ENCODE measurements at regions of chr3 and their contacts with region 1.

Region 1: DNA sequence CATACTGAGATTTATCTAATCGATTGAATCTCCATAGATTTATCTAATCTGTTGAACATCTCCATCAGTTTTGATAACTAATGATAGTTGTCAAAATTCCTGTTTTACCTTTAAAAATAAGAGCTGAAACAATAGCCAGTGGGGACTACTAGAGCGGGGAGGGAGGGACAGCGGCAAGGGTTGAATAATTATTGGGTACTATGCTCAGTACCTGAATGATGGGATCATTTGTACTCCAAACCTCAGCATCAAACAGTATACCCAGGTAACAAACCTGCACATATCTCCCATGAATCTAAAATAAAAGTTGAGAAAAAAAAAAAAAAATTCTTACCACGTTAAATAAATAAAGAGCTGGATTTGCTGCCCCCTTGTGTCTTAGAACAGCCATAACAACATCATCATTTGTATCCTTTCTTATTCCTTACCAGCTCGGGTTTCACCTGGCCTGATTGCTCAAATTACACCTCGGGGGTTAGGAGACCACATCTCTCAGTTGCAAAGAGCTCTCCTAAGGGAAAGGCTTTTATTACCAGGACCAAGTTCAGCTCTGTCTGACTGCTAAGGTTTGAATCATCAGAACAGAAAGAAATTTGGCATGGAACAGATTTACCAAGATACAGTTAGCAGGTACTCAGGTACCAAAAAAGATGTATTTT is 25.7 kb upstream of the RPL39L start:
- DNase-seq: peak in 7 of 9 donors; percentile 53 to 78 (median 72)
- ATAC-seq: peak; percentile 86
- H3K4me3 ChIP-seq: no peak overlapping the region
- H3K4me3 Mint-ChIP-seq: no peak overlapping the region
- H3K27ac ChIP-seq: no peak overlapping the region
- H3K27ac Mint-ChIP-seq: peak overlapping the region in 1 of 9 donors; percentile 21
- H3K4me1 ChIP-seq: peaks cover 0 to 5% of the 10 kb centered on the region in 2 donors
- H3K4me1 Mint-ChIP-seq: peaks cover 3 to 15% (median 7%) of the 10 kb centered on the region in 7 donors
- H3K27me3 ChIP-seq: no peaks in the 10 kb centered on the region
- H3K27me3 Mint-ChIP-seq: peaks cover 0 to 39% (median 4%) of the 10 kb centered on the region in 5 donors

Region 2: GRCh38 chr3:187041362-187042307 is 123.4 kb before region 1 on chr3:
- CTCF ChIA-PET with region 1: interaction called, 10 read pairs
- POLR2A ChIA-PET with region 1: no interaction called
- intact Hi-C with region 1: no loop called
- DNase-seq: peak in 8 of 9 donors; percentile 38 to 77 (median 61)
- ATAC-seq: peak; percentile 93
- H3K4me3 ChIP-seq: peak overlapping the region; percentile 12
- H3K4me3 Mint-ChIP-seq: peak overlapping the region; percentile 56 to 88 (median 80)
- H3K27ac ChIP-seq: peak overlapping the region; percentile 67
- H3K27ac Mint-ChIP-seq: peak overlapping the region; percentile 93 to 99 (median 96)
- H3K4me1 ChIP-seq: peaks cover 41 to 79% of the 10 kb centered on the region in 2 donors
- H3K4me1 Mint-ChIP-seq: peaks cover 59 to 95% (median 84%) of the 10 kb centered on the region in 7 donors
- H3K27me3 ChIP-seq: no peaks in the 10 kb centered on the region
- H3K27me3 Mint-ChIP-seq: no peaks in the 10 kb centered on the region

Region 3: DNA sequence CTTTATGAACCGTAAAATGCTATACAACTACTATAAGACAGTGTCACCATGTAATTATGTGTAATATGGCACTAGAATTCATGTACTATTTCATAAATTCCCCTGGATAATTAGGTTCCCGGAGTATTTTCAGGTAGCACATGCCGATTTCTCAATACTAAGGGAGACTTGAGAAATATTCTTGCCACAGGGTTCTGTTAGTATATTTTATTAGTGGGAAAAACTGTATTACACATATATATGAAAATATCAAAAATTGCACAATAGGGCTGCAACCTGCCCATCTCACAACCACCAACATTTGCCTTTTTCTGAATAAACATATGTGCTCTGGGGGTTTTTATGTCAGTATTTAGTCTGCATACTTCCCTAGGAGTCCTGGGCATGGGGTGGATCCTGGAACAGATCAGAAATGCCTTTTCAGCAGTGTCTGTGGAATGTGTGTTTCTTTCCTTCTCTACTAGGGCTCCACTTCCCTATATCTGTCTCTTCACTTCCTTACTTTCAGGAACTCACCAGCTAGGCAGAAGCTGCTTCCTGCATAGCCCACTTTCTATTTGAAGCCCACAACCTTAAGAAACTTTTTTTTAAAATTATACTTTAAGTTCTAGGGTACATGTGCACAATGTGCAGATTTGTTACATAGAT is 113.2 kb before region 1 on chr3:
- CTCF ChIA-PET with region 1: no interaction called
- POLR2A ChIA-PET with region 1: no interaction called
- intact Hi-C with region 1: no loop called
- DNase-seq: no peak
- ATAC-seq: no peak
- H3K4me3 ChIP-seq: no peak overlapping the region
- H3K4me3 Mint-ChIP-seq: peak overlapping the region in 2 of 10 donors; percentile 9 to 87
- H3K27ac ChIP-seq: no peak overlapping the region
- H3K27ac Mint-ChIP-seq: peak overlapping the region in 7 of 9 donors; percentile 38 to 99 (median 56)
- H3K4me1 ChIP-seq: peaks cover 0 to 21% of the 10 kb centered on the region in 2 donors
- H3K4me1 Mint-ChIP-seq: peaks cover 53 to 87% (median 58%) of the 10 kb centered on the region in 7 donors
- H3K27me3 ChIP-seq: no peaks in the 10 kb centered on the region
- H3K27me3 Mint-ChIP-seq: no peaks in the 10 kb centered on the region

Region 4: GRCh38 chr3:187066228-187066995 is 98.6 kb before region 1 on chr3:
- CTCF ChIA-PET with region 1: no interaction called
- POLR2A ChIA-PET with region 1: interaction called, 3 read pairs
- intact Hi-C with region 1: loop called in 1 of 2 experiments (anchors 1 kb)
- DNase-seq: peak in 7 of 9 donors; percentile 54 to 75 (median 67)
- ATAC-seq: peak; percentile 83
- H3K4me3 ChIP-seq: no peak overlapping the region
- H3K4me3 Mint-ChIP-seq: peak overlapping the region in 7 of 10 donors; percentile 18 to 42 (median 31)
- H3K27ac ChIP-seq: peak overlapping the region; percentile 14
- H3K27ac Mint-ChIP-seq: peak overlapping the region; percentile 61 to 92 (median 84)
- H3K4me1 ChIP-seq: peaks cover 13 to 38% of the 10 kb centered on the region in 2 donors
- H3K4me1 Mint-ChIP-seq: peaks cover 49 to 87% (median 79%) of the 10 kb centered on the region in 7 donors
- H3K27me3 ChIP-seq: no peaks in the 10 kb centered on the region
- H3K27me3 Mint-ChIP-seq: no peaks in the 10 kb centered on the region

Region 5: DNA sequence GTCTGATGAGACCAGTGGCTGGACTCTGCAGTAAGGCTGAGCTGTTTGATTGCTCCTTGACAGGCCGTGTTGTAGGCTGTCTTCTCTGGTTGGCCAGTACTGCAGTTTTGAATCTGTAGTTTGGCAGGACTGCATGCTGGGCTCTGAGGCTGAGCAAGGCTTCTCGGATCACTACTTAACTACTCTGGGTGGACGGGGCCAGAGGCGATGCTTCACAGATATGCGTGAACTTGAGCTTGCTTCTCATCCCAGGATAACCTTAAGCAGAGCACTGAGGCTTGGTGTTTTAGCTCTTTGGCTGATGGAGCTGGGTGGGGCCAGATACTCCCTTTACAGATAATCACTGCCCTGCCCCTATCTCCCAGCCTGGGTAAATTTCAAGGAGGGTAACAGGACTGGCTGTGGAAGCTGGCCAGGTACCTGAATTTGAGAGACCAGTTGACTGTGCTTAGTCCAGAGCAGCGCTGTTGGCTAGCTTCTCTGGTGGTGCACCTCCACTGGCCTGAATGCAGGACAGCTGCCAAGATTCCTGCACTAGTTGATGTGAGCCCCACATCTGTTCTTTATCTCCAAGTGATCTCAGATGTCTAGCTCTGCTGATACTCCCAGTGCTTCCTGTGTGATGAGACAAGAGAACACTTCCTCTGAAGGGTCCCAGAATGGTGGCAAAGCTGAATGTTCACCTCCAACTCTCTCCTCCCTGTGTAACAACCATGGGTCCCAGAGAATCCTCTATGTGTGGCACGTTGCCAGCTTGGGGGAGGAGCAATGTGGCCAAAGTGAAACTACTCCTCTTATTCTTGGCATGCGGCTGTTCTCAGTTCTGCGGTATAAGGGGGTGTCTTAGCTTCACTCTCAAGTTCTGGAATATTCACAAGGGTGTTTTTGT is 63.6 kb before region 1 on chr3:
- CTCF ChIA-PET with region 1: interaction called, 12 read pairs
- POLR2A ChIA-PET with region 1: no interaction called
- intact Hi-C with region 1: no loop called
- DNase-seq: peak; percentile 11 to 51 (median 38)
- ATAC-seq: peak; percentile 76
- H3K4me3 ChIP-seq: peak overlapping the region; percentile 34
- H3K4me3 Mint-ChIP-seq: peak overlapping the region; percentile 62 to 89 (median 78)
- H3K27ac ChIP-seq: no peak overlapping the region
- H3K27ac Mint-ChIP-seq: peak overlapping the region; percentile 52 to 89 (median 72)
- H3K4me1 ChIP-seq: peaks cover 18 to 20% of the 10 kb centered on the region in 2 donors
- H3K4me1 Mint-ChIP-seq: peaks cover 15 to 40% (median 26%) of the 10 kb centered on the region in 7 donors
- H3K27me3 ChIP-seq: no peaks in the 10 kb centered on the region
- H3K27me3 Mint-ChIP-seq: no peaks in the 10 kb centered on the region

Region 6: DNA sequence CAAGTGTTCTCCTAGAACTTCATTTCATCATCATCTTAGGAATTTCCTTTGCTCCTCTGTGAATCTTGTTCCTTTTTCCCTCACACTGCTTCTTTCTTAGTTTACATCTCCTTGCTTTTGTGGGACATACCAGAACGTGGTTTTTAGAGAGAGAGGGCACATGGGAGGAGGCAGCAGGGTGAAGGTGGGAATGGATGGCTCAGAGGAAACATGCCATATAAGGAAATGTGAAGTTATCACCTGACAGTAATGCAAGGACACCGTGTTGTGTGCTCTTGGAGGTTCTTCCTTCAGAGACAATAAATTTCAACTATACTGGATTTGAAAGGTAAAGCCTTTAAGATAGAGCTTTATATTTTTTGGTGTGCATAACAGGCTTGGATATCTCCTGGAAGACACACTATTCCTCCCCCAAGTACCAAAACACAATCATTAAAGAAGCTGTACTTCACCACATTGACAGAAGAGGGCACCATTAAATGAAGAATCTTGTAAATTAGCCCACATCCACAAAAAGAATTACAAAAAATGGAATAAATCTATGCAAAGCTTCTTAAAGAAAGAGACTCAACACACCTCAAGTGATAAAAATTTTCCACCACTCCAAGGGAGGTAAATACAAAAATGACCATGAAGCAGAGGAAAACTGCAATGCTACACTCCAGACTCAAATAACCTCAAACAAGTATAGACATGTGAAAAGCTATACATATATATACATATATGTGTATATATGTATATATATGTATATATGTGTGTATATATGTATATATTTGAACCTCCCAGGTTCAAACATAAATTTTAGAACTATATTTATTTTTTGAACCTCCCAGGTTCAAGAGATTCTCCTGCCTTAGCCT is 51.9 kb before region 1 on chr3:
- CTCF ChIA-PET with region 1: interaction called, 104 read pairs
- POLR2A ChIA-PET with region 1: interaction called, 9 read pairs
- intact Hi-C with region 1: loop called (anchors 1 kb)
- DNase-seq: peak in 6 of 9 donors; percentile 16 to 59 (median 48)
- ATAC-seq: peak; percentile 70
- H3K4me3 ChIP-seq: no peak overlapping the region
- H3K4me3 Mint-ChIP-seq: peak overlapping the region in 1 of 10 donors; percentile 13
- H3K27ac ChIP-seq: no peak overlapping the region
- H3K27ac Mint-ChIP-seq: no peak overlapping the region
- H3K4me1 ChIP-seq: no peaks in the 10 kb centered on the region
- H3K4me1 Mint-ChIP-seq: peaks cover 0 to 9% (median 6%) of the 10 kb centered on the region in 7 donors
- H3K27me3 ChIP-seq: no peaks in the 10 kb centered on the region
- H3K27me3 Mint-ChIP-seq: no peaks in the 10 kb centered on the region

Region 7: GRCh38 chr3:187130346-187131066 is 34.5 kb before region 1 on chr3:
- CTCF ChIA-PET with region 1: interaction called, 5 read pairs
- POLR2A ChIA-PET with region 1: interaction called, 5 read pairs
- intact Hi-C with region 1: loop called in 1 of 2 experiments (anchors 1 kb)
- DNase-seq: peak in 7 of 9 donors; percentile 61 to 86 (median 81)
- ATAC-seq: peak; percentile 99
- H3K4me3 ChIP-seq: no peak overlapping the region
- H3K4me3 Mint-ChIP-seq: peak overlapping the region; percentile 43 to 86 (median 74)
- H3K27ac ChIP-seq: peak overlapping the region; percentile 68
- H3K27ac Mint-ChIP-seq: peak overlapping the region; percentile 95 to 99 (median 97)
- H3K4me1 ChIP-seq: peaks cover 19 to 22% of the 10 kb centered on the region in 2 donors
- H3K4me1 Mint-ChIP-seq: peaks cover 12 to 49% (median 25%) of the 10 kb centered on the region in 7 donors
- H3K27me3 ChIP-seq: no peaks in the 10 kb centered on the region
- H3K27me3 Mint-ChIP-seq: no peaks in the 10 kb centered on the region

Region 8: DNA sequence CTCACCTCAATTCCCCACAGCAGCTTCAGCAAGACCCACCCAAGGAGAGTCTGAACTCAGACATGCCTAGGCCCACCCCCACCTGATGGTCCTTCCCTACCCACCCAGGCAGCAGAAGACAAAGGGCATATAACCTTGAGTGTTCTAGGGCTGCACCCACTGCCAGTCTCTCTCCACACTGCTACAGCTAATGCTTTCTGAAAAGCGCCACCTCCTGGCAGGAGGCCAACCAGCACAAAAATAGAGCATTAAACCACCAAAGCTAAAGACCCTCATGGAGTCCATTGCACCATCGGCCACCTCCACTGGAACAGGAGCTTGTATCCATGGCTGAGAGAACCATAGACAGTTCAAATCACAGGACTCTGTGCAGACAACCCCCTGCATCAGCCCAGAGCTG is 14.4 kb before region 1 on chr3:
- CTCF ChIA-PET with region 1: interaction called, 15 read pairs
- POLR2A ChIA-PET with region 1: interaction called, 3 read pairs
- intact Hi-C with region 1: no loop called
- DNase-seq: peak; percentile 30 to 57 (median 43)
- ATAC-seq: peak; percentile 60
- H3K4me3 ChIP-seq: no peak overlapping the region
- H3K4me3 Mint-ChIP-seq: no peak overlapping the region
- H3K27ac ChIP-seq: no peak overlapping the region
- H3K27ac Mint-ChIP-seq: peak overlapping the region in 1 of 9 donors; percentile 38
- H3K4me1 ChIP-seq: no peaks in the 10 kb centered on the region
- H3K4me1 Mint-ChIP-seq: peaks cover 0 to 32% (median 10%) of the 10 kb centered on the region in 7 donors
- H3K27me3 ChIP-seq: no peaks in the 10 kb centered on the region
- H3K27me3 Mint-ChIP-seq: peaks cover 0 to 48% (median 0%) of the 10 kb centered on the region in 5 donors

Region 9: GRCh38 chr3:187336322-187336721 is 171.3 kb after region 1 on chr3:
- CTCF ChIA-PET with region 1: no interaction called
- POLR2A ChIA-PET with region 1: no interaction called
- intact Hi-C with region 1: no loop called
- DNase-seq: no peak
- ATAC-seq: no peak
- H3K4me3 ChIP-seq: no peak overlapping the region
- H3K4me3 Mint-ChIP-seq: no peak overlapping the region
- H3K27ac ChIP-seq: no peak overlapping the region
- H3K27ac Mint-ChIP-seq: no peak overlapping the region
- H3K4me1 ChIP-seq: no peaks in the 10 kb centered on the region
- H3K4me1 Mint-ChIP-seq: no peaks in the 10 kb centered on the region
- H3K27me3 ChIP-seq: no peaks in the 10 kb centered on the region
- H3K27me3 Mint-ChIP-seq: peaks cover 8 to 27% (median 17%) of the 10 kb centered on the region in 5 donors

Region 10: GRCh38 chr3:187802928-187803259 is 637.9 kb after region 1 on chr3:
- CTCF ChIA-PET with region 1: no interaction called
- POLR2A ChIA-PET with region 1: no interaction called
- intact Hi-C with region 1: no loop called
- DNase-seq: peak in 1 of 9 donors; percentile 66
- ATAC-seq: peak; percentile 56
- H3K4me3 ChIP-seq: no peak overlapping the region
- H3K4me3 Mint-ChIP-seq: peak overlapping the region in 6 of 10 donors; percentile 14 to 69 (median 34)
- H3K27ac ChIP-seq: no peak overlapping the region
- H3K27ac Mint-ChIP-seq: peak overlapping the region in 1 of 9 donors; percentile 90
- H3K4me1 ChIP-seq: peaks cover 22 to 47% of the 10 kb centered on the region in 2 donors
- H3K4me1 Mint-ChIP-seq: peaks cover 23 to 93% (median 44%) of the 10 kb centered on the region in 7 donors
- H3K27me3 ChIP-seq: no peaks in the 10 kb centered on the region
- H3K27me3 Mint-ChIP-seq: no peaks in the 10 kb centered on the region